K562 (cell line): ENCODE measurements at regions of chr1 and their contacts with region 1.

Region 1: DNA sequence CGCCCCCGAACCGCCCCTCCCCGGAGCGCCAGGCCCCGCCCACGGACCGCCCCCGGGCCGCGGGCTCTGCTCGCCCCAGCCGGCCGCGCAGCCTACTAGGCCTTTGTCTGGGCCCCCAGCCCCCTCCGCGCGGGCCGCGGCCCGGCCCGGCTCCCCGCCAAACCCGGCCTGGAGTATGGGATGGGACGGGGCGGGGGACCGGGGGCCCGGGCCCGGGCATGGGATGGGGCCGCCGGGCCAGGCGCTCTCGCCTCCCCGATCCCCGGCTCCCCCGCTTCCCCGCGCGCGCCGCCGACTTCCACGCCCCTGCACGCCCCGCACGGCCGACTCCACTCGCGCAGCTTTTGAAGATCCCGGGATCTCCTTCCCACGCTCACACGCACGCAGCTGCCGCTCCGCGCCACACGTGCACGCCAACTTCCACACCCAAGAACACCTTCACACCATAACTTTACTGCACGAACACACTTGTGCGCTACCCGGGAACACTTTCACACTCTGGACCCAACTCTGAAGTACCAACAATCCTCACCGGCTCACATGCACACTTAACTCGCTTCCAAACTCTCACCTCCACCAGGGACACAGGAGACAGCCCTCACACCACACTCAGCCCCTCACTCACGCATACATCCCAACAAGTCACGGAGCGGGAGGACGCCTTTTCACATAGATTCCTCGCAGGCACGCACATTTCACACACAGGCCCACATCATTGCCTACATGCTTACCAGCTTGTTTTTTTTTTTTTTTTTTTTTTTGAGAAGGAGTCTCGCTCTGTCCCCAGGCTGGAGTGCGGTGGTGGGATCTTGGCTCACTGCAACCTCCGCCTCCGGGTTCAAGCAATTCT is 487 bp upstream of the HSPG2 start:
- DNase-seq: peak in 3 of 4 experiments; percentile 90 to 98 (median 96)
- ATAC-seq: peak; percentile 83
- H3K4me3 ChIP-seq: peak overlapping the region; percentile 39
- H3K27ac ChIP-seq: peak overlapping the region; percentile 60
- H3K4me1 ChIP-seq: peaks cover 73 to 79% of the 10 kb centered on the region in 2 experiments
- H3K27me3 ChIP-seq: no peaks in the 10 kb centered on the region
- CTCF ChIP-seq: no peak
- EP300 ChIP-seq: 0 out of 2 replicates have a peak, but pooled peaks have one; percentile 8
- POLR2A ChIP-seq: peak; percentile 44; the same call in 1 of the 2 replicates
- RAD21 ChIP-seq: 0 out of 4 replicates have a peak, but pooled peaks of 1 of the 2 experiments have one; percentile 3

Region 2: DNA sequence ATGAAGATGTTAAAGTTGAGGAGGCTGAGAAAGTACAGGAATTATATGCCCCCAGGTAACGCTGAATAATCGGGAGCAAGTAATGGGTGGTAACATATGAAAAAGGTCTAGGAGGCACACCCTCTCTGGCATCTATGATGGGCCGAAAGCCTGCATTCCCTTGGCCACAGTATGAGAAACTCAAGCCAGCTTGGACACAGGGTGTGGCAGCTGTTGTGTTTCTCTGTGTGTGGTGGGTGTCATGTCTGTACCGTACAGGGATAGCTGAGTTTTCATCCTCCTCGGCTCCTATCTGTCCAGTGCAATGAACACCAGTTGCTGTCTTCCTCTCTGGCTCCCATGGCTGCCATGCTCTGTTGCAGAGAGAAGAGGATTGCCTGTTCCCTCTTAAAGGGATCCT is 464.7 kb before region 1 on chr1:
- CTCF ChIA-PET with region 1: no interaction called
- POLR2A ChIA-PET with region 1: no interaction called
- in situ Hi-C with region 1: no loop called
- intact Hi-C with region 1: no loop called
- DNase-seq: no peak
- ATAC-seq: no peak
- H3K4me3 ChIP-seq: no peak overlapping the region
- H3K27ac ChIP-seq: no peak overlapping the region
- H3K4me1 ChIP-seq: no peaks in the 10 kb centered on the region
- H3K27me3 ChIP-seq: peaks cover 2 to 21% of the 10 kb centered on the region in 2 experiments; a peak in 2 of 5 replicates
- CTCF ChIP-seq: no peak
- EP300 ChIP-seq: no peak
- POLR2A ChIP-seq: no peak
- RAD21 ChIP-seq: no peak

Region 3: DNA sequence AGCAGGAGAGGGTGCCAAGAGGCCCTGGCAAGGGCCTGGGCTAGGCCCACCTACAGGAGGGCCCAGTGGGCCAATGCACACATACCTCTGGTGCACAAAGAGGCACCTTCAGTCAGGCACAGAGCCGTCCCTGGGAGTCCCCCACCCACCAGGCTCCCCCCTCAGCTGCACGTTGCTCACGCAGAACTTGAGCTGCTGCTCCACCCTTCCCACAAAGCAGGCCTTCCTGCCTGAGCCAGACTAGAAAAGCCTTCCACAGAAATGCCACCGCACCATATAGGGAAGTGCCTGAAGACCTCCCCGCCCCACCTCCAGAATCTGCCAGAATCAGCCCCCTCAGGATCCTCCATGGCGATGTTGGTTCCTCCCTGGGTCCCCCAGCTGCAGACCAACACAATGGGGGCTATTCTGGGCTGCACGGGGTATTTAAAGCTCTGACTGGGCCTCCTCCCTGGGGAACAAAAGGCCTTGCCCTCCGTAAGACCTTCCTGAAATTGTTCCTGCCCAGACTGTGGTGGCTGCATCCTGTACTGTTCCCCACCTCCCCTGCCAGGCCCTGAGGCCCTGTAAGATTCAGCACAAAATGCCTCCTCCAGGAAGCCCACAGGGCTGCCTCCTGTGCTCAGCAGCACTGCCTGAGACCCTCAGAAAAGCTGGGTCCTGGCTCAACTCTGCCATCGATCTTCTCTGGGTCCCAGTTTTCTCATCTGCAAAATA is 27.7 kb before region 1 on chr1:
- CTCF ChIA-PET with region 1: no interaction called
- POLR2A ChIA-PET with region 1: interaction called, 4 read pairs
- in situ Hi-C with region 1: no loop called
- intact Hi-C with region 1: loop called (anchors 2 kb)
- DNase-seq: peak in 2 of 4 experiments; percentile 27 to 60
- ATAC-seq: no peak
- H3K4me3 ChIP-seq: no peak overlapping the region
- H3K27ac ChIP-seq: peak overlapping the region; percentile 46
- H3K4me1 ChIP-seq: peaks cover 76 to 81% of the 10 kb centered on the region in 2 experiments
- H3K27me3 ChIP-seq: no peaks in the 10 kb centered on the region
- CTCF ChIP-seq: no peak
- EP300 ChIP-seq: no peak
- POLR2A ChIP-seq: no peak
- RAD21 ChIP-seq: no peak

Region 4: GRCh38 chr1:21924503-21925005 is 13.0 kb before region 1 on chr1:
- CTCF ChIA-PET with region 1: no interaction called
- POLR2A ChIA-PET with region 1: interaction called, 27 read pairs
- in situ Hi-C with region 1: no loop called
- intact Hi-C with region 1: no loop called
- DNase-seq: no peak
- ATAC-seq: 0 out of 3 replicates have a peak, but pooled peaks have one; percentile 3
- H3K4me3 ChIP-seq: no peak overlapping the region
- H3K27ac ChIP-seq: peak overlapping the region; percentile 55; the same call in 2 of the 3 replicates
- H3K4me1 ChIP-seq: peaks cover 62 to 70% of the 10 kb centered on the region in 2 experiments
- H3K27me3 ChIP-seq: no peaks in the 10 kb centered on the region
- CTCF ChIP-seq: no peak
- EP300 ChIP-seq: no peak
- POLR2A ChIP-seq: no peak; the same call in 1 of the 2 replicates
- RAD21 ChIP-seq: peak; percentile 9 to 22; a peak in 1 of 4 replicates

Region 5: GRCh38 chr1:21952786-21953520 is 15.4 kb after region 1 on chr1:
- CTCF ChIA-PET with region 1: no interaction called
- POLR2A ChIA-PET with region 1: interaction called, 10 read pairs
- in situ Hi-C with region 1: no loop called
- intact Hi-C with region 1: no loop called
- DNase-seq: no peak
- ATAC-seq: 0 out of 3 replicates have a peak, but pooled peaks have one; percentile 33
- H3K4me3 ChIP-seq: no peak overlapping the region
- H3K27ac ChIP-seq: no peak overlapping the region
- H3K4me1 ChIP-seq: peaks cover 18 to 26% of the 10 kb centered on the region in 2 experiments
- H3K27me3 ChIP-seq: no peaks in the 10 kb centered on the region
- CTCF ChIP-seq: peak in 1 of 3 experiments; percentile 29; a peak in 1 of 6 replicates
- EP300 ChIP-seq: no peak
- POLR2A ChIP-seq: no peak
- RAD21 ChIP-seq: no peak